IMR-90 (cell line): ENCODE measurements at regions of chr15 and their contacts with region 1.

Region 1: DNA sequence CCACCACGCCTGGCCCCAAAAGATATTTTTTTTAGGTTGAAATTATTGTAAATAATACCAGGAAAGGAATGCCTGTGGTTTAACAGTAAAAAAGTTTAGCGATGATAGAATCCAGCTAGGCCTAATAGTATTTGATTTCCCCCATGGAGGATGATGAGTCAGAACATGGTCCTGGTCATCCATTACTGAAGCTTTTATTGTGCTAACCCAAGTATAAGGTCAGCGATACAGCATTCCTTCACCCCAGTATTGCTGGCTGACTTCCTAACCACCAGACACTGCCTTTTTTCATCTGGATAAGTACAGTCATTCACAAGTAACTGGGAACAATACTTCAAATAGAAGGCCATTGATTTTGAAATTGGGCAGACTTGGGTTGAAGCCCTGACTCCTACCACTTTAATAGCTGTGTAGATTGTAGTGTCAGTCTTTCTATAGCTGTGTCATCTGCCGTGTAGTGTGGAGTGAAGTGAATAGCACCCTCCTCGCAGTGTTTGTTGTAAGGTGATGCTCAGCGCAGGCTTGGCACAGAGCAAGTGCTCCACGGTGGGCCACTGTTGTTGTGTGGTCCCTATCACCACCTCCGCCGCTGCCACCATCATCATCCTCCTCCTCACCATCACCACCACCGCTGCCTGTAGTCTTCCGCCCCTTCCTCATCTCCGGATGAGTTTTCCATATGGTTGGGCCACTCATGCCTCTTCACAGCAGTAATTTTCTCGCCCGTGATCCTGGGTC is 436.0 kb upstream of the TPM1 start:
- DNase-seq: peak; percentile 100
- ATAC-seq: peak; percentile 95
- H3K4me3 ChIP-seq: no peak overlapping the region
- H3K27ac ChIP-seq: peak overlapping the region; percentile 76
- H3K4me1 ChIP-seq: peaks cover 11% of the 10 kb centered on the region
- H3K27me3 ChIP-seq: no peaks in the 10 kb centered on the region
- CTCF ChIP-seq: no peak
- POLR2A ChIP-seq: no peak
- RAD21 ChIP-seq: peak; percentile 9; the same call in 1 of the 2 replicates

Region 2: DNA sequence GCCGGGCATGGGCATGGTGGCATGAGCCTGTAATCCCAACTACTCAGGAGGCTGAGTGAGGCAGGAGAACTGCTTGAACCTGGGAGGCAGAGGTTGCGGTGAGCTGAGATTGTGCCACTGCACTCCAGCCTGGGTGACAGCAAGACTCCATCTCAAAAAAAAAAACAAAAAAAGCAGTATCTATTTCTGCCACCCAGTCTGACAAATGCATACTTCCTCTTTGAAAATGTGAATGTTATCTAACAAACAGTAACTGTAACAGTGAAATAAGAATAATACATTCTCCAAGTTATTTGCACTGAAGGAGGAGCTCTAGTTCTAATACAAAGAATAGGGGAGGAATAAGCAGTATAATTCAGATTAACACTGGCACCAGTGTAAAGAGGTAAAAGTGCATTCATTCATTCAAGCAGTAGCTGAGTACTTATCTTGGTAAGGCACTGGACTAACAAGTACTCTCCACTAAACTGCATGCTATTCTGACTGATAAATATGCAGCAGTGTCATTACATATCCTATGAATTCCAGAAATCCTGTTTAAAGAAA is 559.2 kb before region 1 on chr15:
- CTCF ChIA-PET with region 1: no interaction called
- POLR2A ChIA-PET with region 1: no interaction called
- dilution Hi-C with region 1: no loop called
- in situ Hi-C with region 1: no loop called
- intact Hi-C with region 1: no loop called
- DNase-seq: no peak
- ATAC-seq: no peak
- H3K4me3 ChIP-seq: no peak overlapping the region
- H3K27ac ChIP-seq: no peak overlapping the region
- H3K4me1 ChIP-seq: no peaks in the 10 kb centered on the region
- H3K27me3 ChIP-seq: no peaks in the 10 kb centered on the region
- CTCF ChIP-seq: no peak
- POLR2A ChIP-seq: no peak
- RAD21 ChIP-seq: no peak

Region 3: DNA sequence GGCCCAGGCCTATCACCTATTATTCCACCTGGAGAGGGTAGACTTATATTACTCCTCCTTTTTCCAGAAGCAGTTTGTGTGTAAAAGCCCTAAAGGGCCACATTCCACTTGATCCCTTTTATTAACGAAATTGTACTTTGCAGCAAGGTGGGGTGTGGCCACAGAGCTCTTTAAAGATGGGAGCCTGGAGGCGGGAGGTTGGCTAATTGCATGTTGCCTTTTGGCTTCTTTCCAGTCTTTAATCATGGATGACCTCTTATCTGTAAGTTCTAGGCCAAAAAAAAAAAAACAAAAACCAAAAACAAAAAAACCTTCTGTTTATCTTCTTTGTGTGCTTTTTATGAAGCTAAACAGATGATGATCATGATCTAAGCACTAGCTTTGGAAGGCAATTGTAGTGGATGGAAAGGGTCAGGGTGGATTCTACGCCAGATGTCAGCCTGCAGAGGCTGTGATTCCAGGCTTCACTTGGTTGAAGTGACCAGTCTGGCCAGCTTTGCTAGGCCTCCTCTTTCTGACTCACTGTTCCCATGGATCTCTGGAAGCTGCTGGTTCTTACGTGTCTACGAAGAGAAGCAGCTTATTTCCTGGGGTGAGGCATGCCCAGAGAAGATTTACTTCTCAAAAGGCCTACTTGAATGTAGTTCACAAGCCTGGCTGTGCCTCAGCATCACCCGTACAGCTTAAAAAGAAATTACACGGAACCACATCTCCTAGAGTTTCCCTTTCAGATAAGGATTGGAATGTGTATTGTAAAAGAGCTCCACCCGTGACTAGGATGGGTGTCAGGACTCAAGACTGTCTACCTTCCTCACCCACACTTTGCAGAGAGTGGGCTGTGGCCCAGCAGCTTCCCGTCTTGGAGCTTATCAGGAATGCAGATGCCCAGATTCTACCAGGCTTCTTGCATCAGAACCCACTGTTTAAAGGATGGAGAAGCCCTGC is 110.6 kb before region 1 on chr15:
- CTCF ChIA-PET with region 1: no interaction called
- POLR2A ChIA-PET with region 1: no interaction called
- dilution Hi-C with region 1: no loop called
- in situ Hi-C with region 1: no loop called
- intact Hi-C with region 1: loop called (anchors 5 kb)
- DNase-seq: peak; percentile 94
- ATAC-seq: peak; percentile 73
- H3K4me3 ChIP-seq: no peak overlapping the region
- H3K27ac ChIP-seq: peak overlapping the region; percentile 61; the same call in 1 of the 2 replicates
- H3K4me1 ChIP-seq: peaks cover 13% of the 10 kb centered on the region
- H3K27me3 ChIP-seq: no peaks in the 10 kb centered on the region
- CTCF ChIP-seq: no peak
- POLR2A ChIP-seq: no peak
- RAD21 ChIP-seq: no peak

Region 4: DNA sequence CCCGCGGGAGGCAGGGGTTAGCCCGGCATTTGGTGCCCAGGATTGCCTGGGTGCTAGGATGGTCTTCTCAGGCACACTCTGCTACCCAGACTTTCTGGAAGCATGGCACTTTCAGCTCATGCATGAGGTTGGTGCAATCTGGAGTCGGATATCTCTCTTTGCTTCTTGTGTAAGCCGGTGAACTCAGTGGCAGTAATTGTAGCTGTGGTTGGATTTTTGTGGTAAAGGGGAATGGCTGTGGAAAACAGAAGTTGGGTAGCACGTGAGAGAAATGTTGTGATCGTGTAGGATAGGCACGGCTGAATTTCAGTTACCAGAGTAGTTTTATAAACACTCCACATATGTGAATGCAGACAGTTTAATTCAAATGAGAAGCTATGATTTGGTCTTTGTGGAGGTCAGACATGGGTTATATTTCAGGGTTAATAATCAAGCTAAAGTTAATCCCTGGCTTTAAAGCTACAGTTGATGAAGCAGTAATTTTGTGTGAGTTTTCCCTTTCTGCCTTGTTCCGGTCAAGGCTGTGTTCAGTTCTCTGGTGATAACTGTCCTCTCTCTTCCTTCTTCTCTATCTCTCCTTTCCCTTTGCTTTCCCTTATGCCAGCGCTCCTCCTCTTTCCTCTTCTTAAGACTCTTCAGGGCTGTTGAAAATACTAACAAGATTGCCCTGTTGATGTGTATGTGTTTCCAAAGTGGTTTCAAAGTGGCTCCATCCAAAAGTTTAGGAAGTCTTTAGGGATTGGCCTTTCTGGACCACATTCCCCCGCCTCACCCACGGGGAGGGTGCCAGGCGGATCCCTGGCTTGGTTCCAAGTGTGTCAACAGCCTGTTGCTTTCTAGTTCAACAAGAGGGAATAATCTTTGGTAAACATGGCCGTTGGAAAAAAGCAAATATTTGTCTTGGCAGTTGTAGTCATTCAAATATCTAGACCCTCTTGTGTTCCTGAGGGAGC is 36.8 kb before region 1 on chr15:
- CTCF ChIA-PET with region 1: no interaction called
- POLR2A ChIA-PET with region 1: no interaction called
- dilution Hi-C with region 1: no loop called
- in situ Hi-C with region 1: no loop called
- intact Hi-C with region 1: loop called (anchors 2 kb)
- DNase-seq: peak; percentile 96
- ATAC-seq: peak; percentile 95
- H3K4me3 ChIP-seq: no peak overlapping the region
- H3K27ac ChIP-seq: peak overlapping the region; percentile 24; the same call in 1 of the 2 replicates
- H3K4me1 ChIP-seq: peaks cover 14% of the 10 kb centered on the region
- H3K27me3 ChIP-seq: peaks cover 23% of the 10 kb centered on the region
- CTCF ChIP-seq: no peak
- POLR2A ChIP-seq: no peak
- RAD21 ChIP-seq: peak; percentile 11; the same call in 1 of the 2 replicates

Region 5: DNA sequence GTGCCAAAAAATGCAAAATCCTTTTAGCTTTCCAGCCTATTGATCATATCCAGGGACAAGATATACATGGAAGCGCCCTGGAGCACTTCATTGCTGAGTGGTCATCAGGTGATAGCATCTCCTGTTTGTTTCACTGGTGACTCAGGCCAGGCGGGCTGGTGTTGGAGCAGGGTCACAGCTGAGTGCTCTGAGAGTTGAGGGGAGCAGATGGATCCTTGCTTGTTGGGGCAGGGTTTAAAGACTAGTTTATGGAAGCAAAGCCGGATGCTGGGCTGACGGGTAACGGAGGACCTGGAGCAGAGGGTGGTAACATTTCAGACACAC is 31.0 kb after region 1 on chr15:
- CTCF ChIA-PET with region 1: no interaction called
- POLR2A ChIA-PET with region 1: no interaction called
- dilution Hi-C with region 1: no loop called
- in situ Hi-C with region 1: no loop called
- intact Hi-C with region 1: no loop called
- DNase-seq: no peak
- ATAC-seq: no peak
- H3K4me3 ChIP-seq: no peak overlapping the region
- H3K27ac ChIP-seq: no peak overlapping the region
- H3K4me1 ChIP-seq: peaks cover 2% of the 10 kb centered on the region; the same call in 1 of the 2 replicates
- H3K27me3 ChIP-seq: no peaks in the 10 kb centered on the region
- CTCF ChIP-seq: no peak
- POLR2A ChIP-seq: no peak
- RAD21 ChIP-seq: no peak